ENCODE measurements at regions of chr7 and their contacts with region 1.

Region 1: DNA sequence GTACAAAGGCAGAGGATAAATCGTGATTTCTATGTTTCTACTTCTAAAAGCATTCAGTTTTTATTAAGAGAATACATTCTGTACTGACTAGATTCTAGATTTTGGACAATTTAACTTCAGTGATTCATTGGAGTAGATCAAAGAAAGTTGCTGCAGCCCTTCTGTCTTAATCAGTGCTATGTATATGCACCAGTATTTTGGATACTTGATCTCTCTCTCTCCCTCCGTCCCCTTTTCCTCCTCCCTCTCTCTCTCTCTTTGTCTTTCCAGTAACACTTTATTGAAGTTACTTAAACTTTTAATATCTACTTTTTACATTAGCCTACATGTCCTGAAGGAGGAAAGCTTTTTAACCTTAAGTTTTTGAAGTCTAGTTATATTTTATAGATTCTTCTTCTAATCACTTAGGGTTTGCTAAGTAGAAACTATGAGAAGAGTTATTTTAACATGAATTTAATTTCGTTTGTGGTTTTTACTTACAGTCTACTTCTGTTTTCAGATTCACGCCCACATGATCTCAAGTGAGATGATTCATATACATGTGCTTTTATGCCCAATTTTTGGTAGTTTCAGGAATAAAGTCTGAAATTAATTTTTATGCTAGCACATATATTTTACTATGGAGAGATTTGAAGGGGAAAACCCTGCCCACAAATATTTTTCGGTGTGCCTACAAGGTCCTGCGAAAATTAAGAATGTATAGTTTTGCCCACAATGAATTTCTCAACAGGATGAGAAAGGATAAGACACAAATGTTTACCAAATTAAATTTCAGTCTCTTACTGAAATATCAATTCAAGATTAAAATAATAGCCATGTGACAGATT is 9.1 kb downstream of the MDFIC start:
- DNase-seq: no peak
- H3K4me3 Mint-ChIP-seq: peak overlapping the region; percentile 63
- H3K27ac Mint-ChIP-seq: no peak overlapping the region
- H3K4me1 Mint-ChIP-seq: peaks cover 58% of the 10 kb centered on the region
- H3K27me3 Mint-ChIP-seq: no peaks in the 10 kb centered on the region

Region 2: DNA sequence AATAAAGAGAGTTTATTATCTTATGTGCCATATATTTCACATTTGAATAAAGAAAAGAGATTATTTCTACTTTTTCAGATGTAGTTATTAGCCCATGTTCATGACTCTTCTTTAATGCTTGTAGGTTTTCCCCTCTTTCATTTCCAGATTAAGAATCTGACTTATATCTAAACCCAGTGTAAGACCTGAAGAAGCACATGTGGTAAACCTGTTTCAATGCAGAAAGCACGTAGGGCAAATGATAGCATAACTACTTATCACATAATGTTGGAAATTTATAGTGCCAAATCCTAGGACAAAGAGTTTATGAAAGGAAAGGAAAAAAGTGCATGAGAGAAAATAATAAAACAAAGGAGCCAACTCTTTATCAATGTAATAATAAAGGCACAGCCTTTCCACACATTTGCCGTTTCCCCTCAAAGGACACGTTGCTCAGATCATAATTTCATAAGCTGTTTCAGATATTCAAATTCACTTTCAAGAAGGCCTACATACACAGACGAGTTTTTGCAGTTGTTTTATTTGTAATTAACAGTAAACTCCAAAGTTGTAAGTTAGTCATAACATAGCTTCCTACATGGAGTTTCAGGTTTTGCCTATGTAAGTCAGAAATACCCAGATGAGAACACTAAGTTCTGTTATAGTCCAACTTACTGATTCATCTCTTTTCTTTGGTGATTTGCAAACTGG is 98.0 kb before region 1 on chr7:
- CTCF ChIA-PET with region 1: no interaction called
- intact Hi-C with region 1: loop called (anchors 1 kb)
- DNase-seq: peak; percentile 12
- H3K4me3 Mint-ChIP-seq: no peak overlapping the region
- H3K27ac Mint-ChIP-seq: peak overlapping the region; percentile 93
- H3K4me1 Mint-ChIP-seq: peaks cover 37% of the 10 kb centered on the region
- H3K27me3 Mint-ChIP-seq: peaks cover 14% of the 10 kb centered on the region

Region 3: GRCh38 chr7:114916261-114916892 is 14.7 kb before region 1 on chr7:
- CTCF ChIA-PET with region 1: no interaction called
- intact Hi-C with region 1: loop called (anchors 1 kb)
- DNase-seq: peak; percentile 81
- H3K4me3 Mint-ChIP-seq: peak overlapping the region; percentile 46
- H3K27ac Mint-ChIP-seq: peak overlapping the region; percentile 94
- H3K4me1 Mint-ChIP-seq: peaks cover 66% of the 10 kb centered on the region
- H3K27me3 Mint-ChIP-seq: no peaks in the 10 kb centered on the region

Region 4: GRCh38 chr7:114959931-114960330 is 28.9 kb after region 1 on chr7:
- CTCF ChIA-PET with region 1: no interaction called
- intact Hi-C with region 1: loop called (anchors 2 kb)
- DNase-seq: no peak
- H3K4me3 Mint-ChIP-seq: no peak overlapping the region
- H3K27ac Mint-ChIP-seq: no peak overlapping the region
- H3K4me1 Mint-ChIP-seq: peaks cover 58% of the 10 kb centered on the region
- H3K27me3 Mint-ChIP-seq: no peaks in the 10 kb centered on the region

Region 5: GRCh38 chr7:115217373-115217772 is 286.3 kb after region 1 on chr7:
- CTCF ChIA-PET with region 1: no interaction called
- intact Hi-C with region 1: loop called (anchors 2 kb)
- DNase-seq: no peak
- H3K4me3 Mint-ChIP-seq: no peak overlapping the region
- H3K27ac Mint-ChIP-seq: no peak overlapping the region
- H3K4me1 Mint-ChIP-seq: peaks cover 10% of the 10 kb centered on the region
- H3K27me3 Mint-ChIP-seq: no peaks in the 10 kb centered on the region